Ascending aorta (tissue), 2 donors: ENCODE measurements at regions of chr2 and their contacts with region 1.

Region 1: DNA sequence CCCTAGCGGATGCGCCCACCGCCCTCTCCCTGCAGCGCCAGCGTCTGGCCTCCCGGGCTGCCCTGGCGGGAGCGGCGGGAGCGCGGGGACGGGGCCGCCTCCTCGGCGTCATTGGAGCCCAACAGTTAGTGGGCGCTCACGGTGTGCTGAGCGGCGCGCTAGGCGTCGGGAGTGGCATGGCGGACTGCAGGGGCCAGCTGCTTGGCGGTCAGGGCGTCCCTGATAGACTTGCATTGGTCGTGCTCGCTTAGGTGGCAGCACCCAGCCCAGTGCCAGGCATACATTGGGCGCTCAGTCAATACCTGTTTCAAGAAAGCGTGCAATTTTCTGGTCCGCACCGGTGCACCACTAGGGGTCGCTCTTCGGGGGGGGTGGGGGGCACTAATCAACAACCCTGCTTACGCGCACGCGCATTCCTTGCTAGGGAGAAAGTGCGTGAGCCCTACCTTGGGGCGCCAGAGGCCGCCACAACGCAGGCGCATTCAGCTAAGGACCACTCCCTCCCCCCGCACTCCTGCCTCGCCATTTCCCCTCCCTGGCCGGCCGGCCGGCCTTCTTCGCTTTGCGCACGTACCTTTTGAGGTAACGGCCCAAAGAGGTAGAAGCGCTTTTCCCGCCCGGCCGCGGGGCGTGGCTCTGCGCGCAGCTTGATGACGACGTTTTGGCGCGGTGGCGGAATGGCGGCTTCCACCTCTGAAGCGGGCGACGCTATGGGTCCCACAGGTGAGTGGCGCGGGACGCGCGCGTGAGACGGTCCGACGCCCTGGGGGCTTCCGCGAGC is 411 bp upstream of the MZT2A start:
- DNase-seq: peak; percentile 72 to 89
- H3K4me3 ChIP-seq: peak overlapping the region; percentile 87 to 98
- H3K27ac ChIP-seq: peak overlapping the region; percentile 77 to 86
- H3K4me1 ChIP-seq: peaks cover 2 to 6% of the 10 kb centered on the region in 2 donors
- H3K27me3 ChIP-seq: no peaks in the 10 kb centered on the region
- CTCF ChIP-seq: peak; percentile 38 to 77 (median 76)

Region 2: DNA sequence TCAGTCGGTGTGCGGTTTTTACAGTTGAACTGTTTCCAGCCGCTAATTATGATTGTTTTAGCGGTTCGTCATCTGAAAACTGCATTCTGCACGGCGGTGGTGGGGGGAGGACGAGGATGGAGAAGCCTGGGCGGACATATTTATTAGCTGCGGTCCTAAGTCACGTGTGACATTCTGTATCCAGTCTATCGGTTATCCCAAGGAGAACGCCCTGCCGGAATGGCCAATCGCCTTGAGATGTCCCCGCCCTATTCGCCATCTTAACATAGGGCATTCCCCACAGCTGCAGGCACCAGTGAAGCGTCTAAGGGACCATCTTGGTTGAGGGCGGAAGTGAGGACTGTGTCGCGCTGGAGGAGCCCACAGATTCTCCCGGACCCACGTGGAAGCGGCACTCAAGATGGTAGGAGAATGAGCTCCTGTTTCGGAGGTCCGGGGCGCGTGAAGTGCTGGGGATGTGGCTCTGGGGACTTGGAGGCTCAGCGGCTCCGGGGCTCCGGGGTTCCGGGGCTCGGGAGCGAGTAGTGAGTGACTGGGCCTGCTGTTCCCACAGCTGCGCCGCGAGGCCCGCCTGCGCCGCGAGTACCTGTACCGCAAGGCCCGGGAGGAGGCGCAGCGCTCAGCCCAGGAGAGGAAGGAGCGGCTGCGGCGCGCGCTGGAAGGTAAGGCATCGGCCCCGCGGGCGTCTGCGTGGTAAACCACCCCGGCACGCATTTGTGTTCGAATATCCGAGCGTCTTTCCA is 1149.9 kb before region 1 on chr2 and contains the start of gene IMP4:
- intact Hi-C with region 1: loop called (anchors 5 kb)
- DNase-seq: peak; percentile 98 to 99
- H3K4me3 ChIP-seq: peak within 1 kb of the TSS; percentile 82 to 92
- H3K27ac ChIP-seq: peak within 1 kb of the TSS; percentile 90 to 97
- H3K4me1 ChIP-seq: peaks cover 3 to 16% of the 10 kb centered on the region in 2 donors
- H3K27me3 ChIP-seq: no peaks in the 10 kb centered on the region
- CTCF ChIP-seq: peak; percentile 9 to 36 (median 16)
- total RNA-seq, gene IMP4: 97.9 TPM

Region 3: GRCh38 chr2:130797493-130798435 is 694.8 kb before region 1 on chr2:
- intact Hi-C with region 1: loop called (anchors 10 kb)
- DNase-seq: peak; percentile 39 to 93
- H3K4me3 ChIP-seq: peak overlapping the region; percentile 59 to 70
- H3K27ac ChIP-seq: peak overlapping the region; percentile 88 to 90
- H3K4me1 ChIP-seq: peaks cover 0 to 8% of the 10 kb centered on the region in 2 donors
- H3K27me3 ChIP-seq: no peaks in the 10 kb centered on the region
- CTCF ChIP-seq: peak; percentile 86 to 96 (median 95)

Region 4: GRCh38 chr2:131034122-131035051 is 458.2 kb before region 1 on chr2:
- intact Hi-C with region 1: no loop called
- DNase-seq: peak in 1 of 2 donors; percentile 43
- H3K4me3 ChIP-seq: peak overlapping the region; percentile 36 to 67
- H3K27ac ChIP-seq: no peak overlapping the region
- H3K4me1 ChIP-seq: no peaks in the 10 kb centered on the region
- H3K27me3 ChIP-seq: no peaks in the 10 kb centered on the region
- CTCF ChIP-seq: no peak

Region 5: DNA sequence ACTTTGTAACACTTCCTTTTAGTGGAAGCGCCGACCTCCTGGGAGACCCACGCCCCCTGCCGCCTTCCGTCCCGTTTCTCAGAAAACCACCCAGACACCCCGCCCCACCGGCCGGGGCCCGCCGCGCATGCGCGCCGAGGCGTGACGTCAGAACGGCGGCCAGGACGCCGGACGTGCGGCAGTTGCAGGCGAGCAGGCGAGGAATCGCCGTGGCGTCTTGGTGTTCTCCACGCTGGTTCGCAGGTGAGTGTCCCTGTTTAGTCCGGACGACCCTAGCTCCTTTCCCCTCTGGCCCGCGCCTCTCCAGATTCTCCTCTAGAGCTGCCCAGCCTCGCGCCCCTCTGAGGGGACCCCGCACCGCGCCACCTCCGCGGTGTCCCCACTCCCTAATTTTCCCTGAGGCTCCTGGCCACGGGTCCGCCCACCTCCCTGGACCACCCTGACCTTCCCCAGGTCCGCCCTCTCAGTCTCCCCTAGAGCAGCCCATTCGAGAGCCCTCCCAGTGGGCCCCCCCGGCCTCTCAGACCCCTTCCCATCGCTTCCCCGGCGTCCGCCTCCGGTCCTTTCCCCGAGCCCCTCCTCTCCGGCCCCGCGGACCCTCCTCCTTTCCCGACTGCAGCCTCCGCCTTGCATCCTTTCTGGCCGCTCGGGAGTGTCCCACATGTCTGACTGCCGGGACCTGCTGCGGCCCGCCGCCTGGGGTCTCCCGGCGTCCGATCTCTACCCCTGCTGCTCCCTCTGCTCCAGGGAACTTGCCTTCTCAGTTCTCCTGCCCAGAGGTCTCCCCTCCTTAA is 387.3 kb before region 1 on chr2 and contains the start of gene PLEKHB2:
- intact Hi-C with region 1: loop called (anchors 5 kb)
- DNase-seq: peak; percentile 64 to 96
- H3K4me3 ChIP-seq: peak within 1 kb of the TSS; percentile 83 to 97
- H3K27ac ChIP-seq: peak within 1 kb of the TSS; percentile 85 to 86
- H3K4me1 ChIP-seq: peaks cover 0 to 14% of the 10 kb centered on the region in 2 donors
- H3K27me3 ChIP-seq: no peaks in the 10 kb centered on the region
- CTCF ChIP-seq: peak in 1 of 3 experiments; percentile 13
- total RNA-seq, gene PLEKHB2: 61.7 TPM

Region 6: DNA sequence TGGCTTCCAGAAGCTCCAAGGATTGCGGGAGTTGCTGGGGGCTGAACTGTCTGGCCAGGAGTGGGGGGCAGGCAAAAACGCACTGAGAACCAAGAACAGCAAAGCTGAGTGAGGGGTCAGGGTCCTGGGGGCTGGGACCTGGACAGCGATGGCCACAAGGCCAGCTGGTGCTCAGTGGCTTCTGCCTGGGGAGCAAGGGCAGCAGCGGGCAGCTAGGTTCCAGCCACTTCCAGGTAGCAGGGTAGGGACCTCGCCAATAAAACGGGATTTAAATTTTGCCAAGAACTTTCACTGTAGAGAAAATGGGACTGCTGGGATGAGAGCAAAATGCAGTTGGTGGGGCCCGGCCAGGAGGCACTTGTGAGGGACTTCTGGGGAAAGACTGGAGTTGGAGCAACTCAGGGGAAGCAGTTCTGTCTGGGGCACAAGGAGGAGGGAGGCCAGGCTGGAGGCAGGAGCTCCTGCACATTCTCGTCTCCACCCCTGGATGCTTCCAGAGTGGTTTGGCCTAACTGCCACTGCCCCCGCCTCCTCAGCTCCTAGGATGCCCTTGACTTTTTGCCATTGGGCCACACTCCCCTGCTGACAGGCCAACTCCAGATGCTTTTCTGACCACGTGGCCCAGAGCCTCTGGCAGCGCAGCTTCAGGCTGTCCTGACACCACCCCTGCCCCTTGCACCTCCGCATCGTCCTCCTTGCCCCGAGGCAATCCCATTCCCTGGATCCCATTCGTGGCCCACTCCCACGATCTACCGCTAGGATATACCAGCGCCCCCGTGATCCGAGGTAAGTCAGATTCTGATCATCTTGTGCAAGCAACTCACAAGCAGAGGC is 29.6 kb after region 1 on chr2:
- intact Hi-C with region 1: loop called (anchors 5 kb)
- DNase-seq: no peak
- H3K4me3 ChIP-seq: no peak overlapping the region
- H3K27ac ChIP-seq: no peak overlapping the region
- H3K4me1 ChIP-seq: no peaks in the 10 kb centered on the region
- H3K27me3 ChIP-seq: no peaks in the 10 kb centered on the region
- CTCF ChIP-seq: no peak

Region 7: GRCh38 chr2:132562245-132562644 is 1069.6 kb after region 1 on chr2:
- intact Hi-C with region 1: no loop called
- DNase-seq: no peak
- H3K4me3 ChIP-seq: no peak overlapping the region
- H3K27ac ChIP-seq: no peak overlapping the region
- H3K4me1 ChIP-seq: no peaks in the 10 kb centered on the region
- H3K27me3 ChIP-seq: no peaks in the 10 kb centered on the region
- CTCF ChIP-seq: no peak